K562 (cell line): ENCODE measurements at regions of chr18 and their contacts with region 1.

Region 1: GRCh38 chr18:54558609-54559585 is 32.1 kb upstream of the DYNAP start:
- DNase-seq: peak; percentile 9 to 30 (median 22)
- ATAC-seq: no peak
- H3K4me3 ChIP-seq: no peak overlapping the region
- H3K27ac ChIP-seq: no peak overlapping the region
- H3K4me1 ChIP-seq: no peaks in the 10 kb centered on the region
- H3K27me3 ChIP-seq: no peaks in the 10 kb centered on the region
- CTCF ChIP-seq: peak; percentile 34 to 62 (median 47); a peak in 3 of 6 replicates
- EP300 ChIP-seq: no peak
- POLR2A ChIP-seq: no peak
- RAD21 ChIP-seq: peak; percentile 60 to 79

Region 2: GRCh38 chr18:54647176-54647575 is 88.3 kb after region 1 on chr18:
- CTCF ChIA-PET with region 1: no interaction called
- POLR2A ChIA-PET with region 1: no interaction called
- in situ Hi-C with region 1: loop called (anchors 10 kb)
- intact Hi-C with region 1: loop called (anchors 2 kb)
- DNase-seq: peak in 2 of 4 experiments; percentile 7 to 30
- ATAC-seq: no peak
- H3K4me3 ChIP-seq: no peak overlapping the region
- H3K27ac ChIP-seq: no peak overlapping the region
- H3K4me1 ChIP-seq: no peaks in the 10 kb centered on the region
- H3K27me3 ChIP-seq: no peaks in the 10 kb centered on the region
- CTCF ChIP-seq: peak; percentile 16 to 67 (median 60); a peak in 3 of 6 replicates
- EP300 ChIP-seq: no peak
- POLR2A ChIP-seq: no peak
- RAD21 ChIP-seq: peak; percentile 65 to 84